IMR-90 (cell line): ENCODE measurements at regions of chr2 and their contacts with region 1.

Region 1: GRCh38 chr2:1886405-1886992 is 142.2 kb upstream of the PXDN start:
- DNase-seq: peak; percentile 66
- ATAC-seq: peak; percentile 69
- H3K4me3 ChIP-seq: no peak overlapping the region
- H3K27ac ChIP-seq: no peak overlapping the region
- H3K4me1 ChIP-seq: no peaks in the 10 kb centered on the region
- H3K27me3 ChIP-seq: peaks cover 3% of the 10 kb centered on the region
- CTCF ChIP-seq: peak; percentile 63
- POLR2A ChIP-seq: no peak
- RAD21 ChIP-seq: peak; percentile 40

Region 2: DNA sequence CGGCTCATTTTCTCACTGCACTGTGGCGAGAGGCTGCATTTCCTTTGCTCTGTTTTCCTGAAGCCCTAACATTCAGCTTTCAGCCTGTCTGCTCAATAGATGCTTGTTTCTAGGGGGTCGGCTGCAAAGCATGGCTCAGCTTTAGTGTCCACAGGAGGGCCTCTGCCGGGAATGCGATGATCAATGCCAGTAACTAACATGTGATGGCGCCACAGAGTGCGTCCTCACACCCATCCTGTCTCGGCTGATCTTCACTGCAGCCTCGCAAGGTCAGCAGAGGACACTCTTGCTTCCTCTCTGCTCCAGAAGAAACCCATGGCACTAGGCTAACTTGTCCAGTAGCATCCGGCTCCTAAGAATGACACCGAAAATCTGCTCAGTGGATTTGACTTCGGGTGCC is 14.2 kb after region 1 on chr2:
- CTCF ChIA-PET with region 1: interaction called, 11 read pairs
- POLR2A ChIA-PET with region 1: no interaction called
- dilution Hi-C with region 1: no loop called
- in situ Hi-C with region 1: no loop called
- intact Hi-C with region 1: no loop called
- DNase-seq: no peak
- ATAC-seq: no peak
- H3K4me3 ChIP-seq: no peak overlapping the region
- H3K27ac ChIP-seq: no peak overlapping the region
- H3K4me1 ChIP-seq: no peaks in the 10 kb centered on the region
- H3K27me3 ChIP-seq: no peaks in the 10 kb centered on the region; the same call in 1 of the 2 replicates
- CTCF ChIP-seq: no peak
- POLR2A ChIP-seq: no peak
- RAD21 ChIP-seq: no peak

Region 3: DNA sequence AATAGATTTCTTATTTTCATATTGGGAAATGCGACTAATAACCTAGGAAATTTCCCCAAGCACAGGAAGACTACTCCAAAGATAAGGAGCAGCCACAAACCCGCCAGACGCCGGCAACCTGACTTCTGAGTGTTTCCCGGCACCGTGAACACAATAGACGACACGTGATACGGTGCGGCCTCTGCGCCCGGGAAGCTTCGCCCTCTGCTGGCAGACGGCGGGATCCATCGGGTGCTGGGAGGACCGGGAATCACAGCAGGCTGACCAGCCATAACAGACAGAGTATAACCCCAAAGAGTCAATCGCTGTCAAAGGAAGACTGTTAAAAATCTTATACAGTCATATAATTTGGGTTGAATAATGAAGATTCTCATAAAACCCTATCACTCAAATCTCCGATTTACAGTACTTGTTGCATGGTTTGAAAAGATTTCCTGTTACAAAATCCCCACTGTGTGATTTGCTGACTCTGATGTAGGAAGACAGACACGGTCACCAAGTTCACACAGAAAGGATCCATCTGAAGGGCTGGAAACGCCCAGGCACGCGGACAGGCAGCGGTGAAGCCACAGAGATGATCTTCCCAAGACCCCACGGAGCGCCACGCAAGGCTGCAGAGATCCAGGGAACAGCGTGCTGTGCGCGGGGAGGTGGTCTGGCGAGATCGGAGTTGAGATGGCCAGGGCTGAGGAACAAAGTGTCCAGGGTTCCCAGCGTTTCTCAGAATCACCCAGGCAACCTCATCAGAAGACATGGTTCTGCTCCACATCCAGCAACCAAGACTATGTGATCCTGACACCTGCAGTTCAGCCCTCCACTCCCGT is 1417.3 kb after region 1 on chr2:
- CTCF ChIA-PET with region 1: interaction called, 5 read pairs
- POLR2A ChIA-PET with region 1: no interaction called
- dilution Hi-C with region 1: no loop called
- in situ Hi-C with region 1: no loop called
- intact Hi-C with region 1: loop called (anchors 1 kb)
- DNase-seq: peak; percentile 77
- ATAC-seq: peak; percentile 99
- H3K4me3 ChIP-seq: no peak overlapping the region
- H3K27ac ChIP-seq: no peak overlapping the region
- H3K4me1 ChIP-seq: no peaks in the 10 kb centered on the region
- H3K27me3 ChIP-seq: no peaks in the 10 kb centered on the region
- CTCF ChIP-seq: peak; percentile 94
- POLR2A ChIP-seq: no peak
- RAD21 ChIP-seq: peak; percentile 84